PC-3 (cell line): ENCODE measurements at regions of chr18 and their contacts with region 1.

Region 1: GRCh38 chr18:62799977-62800376 is 84.6 kb downstream of the PHLPP1 start:
- DNase-seq: no peak
- ATAC-seq: no peak; the same call in 1 of the 2 replicates
- H3K4me3 ChIP-seq: no peak overlapping the region
- H3K27ac ChIP-seq: peak overlapping the region; percentile 72
- H3K4me1 ChIP-seq: peaks cover 39% of the 10 kb centered on the region
- H3K27me3 ChIP-seq: no peaks in the 10 kb centered on the region
- CTCF ChIP-seq: no peak

Region 2: GRCh38 chr18:62763101-62763521 is 36.9 kb before region 1 on chr18:
- CTCF ChIA-PET with region 1: no interaction called
- POLR2A ChIA-PET with region 1: no interaction called
- intact Hi-C with region 1: loop called (anchors 2 kb)
- DNase-seq: peak; percentile 56
- ATAC-seq: peak; percentile 52
- H3K4me3 ChIP-seq: no peak overlapping the region
- H3K27ac ChIP-seq: peak overlapping the region; percentile 44
- H3K4me1 ChIP-seq: peaks cover 56% of the 10 kb centered on the region
- H3K27me3 ChIP-seq: no peaks in the 10 kb centered on the region
- CTCF ChIP-seq: no peak

Region 3: GRCh38 chr18:62781893-62782292 is 18.1 kb before region 1 on chr18:
- CTCF ChIA-PET with region 1: no interaction called
- POLR2A ChIA-PET with region 1: interaction called, 3 read pairs
- intact Hi-C with region 1: loop called (anchors 2 kb)
- DNase-seq: peak; percentile 85
- ATAC-seq: peak; percentile 77
- H3K4me3 ChIP-seq: no peak overlapping the region
- H3K27ac ChIP-seq: peak overlapping the region; percentile 55
- H3K4me1 ChIP-seq: peaks cover 22% of the 10 kb centered on the region
- H3K27me3 ChIP-seq: no peaks in the 10 kb centered on the region
- CTCF ChIP-seq: no peak

Region 4: GRCh38 chr18:62954366-62954765 is 154.4 kb after region 1 on chr18:
- CTCF ChIA-PET with region 1: no interaction called
- POLR2A ChIA-PET with region 1: no interaction called
- intact Hi-C with region 1: no loop called
- DNase-seq: peak; percentile 85
- ATAC-seq: peak; percentile 93
- H3K4me3 ChIP-seq: no peak overlapping the region
- H3K27ac ChIP-seq: peak overlapping the region; percentile 73
- H3K4me1 ChIP-seq: peaks cover 33% of the 10 kb centered on the region
- H3K27me3 ChIP-seq: no peaks in the 10 kb centered on the region
- CTCF ChIP-seq: no peak